H1 (cell line): ENCODE measurements at regions of chr10 and their contacts with region 1.

Region 1: GRCh38 chr10:18087355-18087754 is 52.9 kb upstream of the CACNB2 start:
- DNase-seq: no peak
- H3K4me3 ChIP-seq: no peak overlapping the region
- H3K27ac ChIP-seq: no peak overlapping the region
- H3K4me1 ChIP-seq: no peaks in the 10 kb centered on the region
- H3K27me3 ChIP-seq: no peaks in the 10 kb centered on the region
- CTCF ChIP-seq: no peak
- EP300 ChIP-seq: no peak
- POLR2A ChIP-seq: no peak
- RAD21 ChIP-seq: no peak

Region 2: GRCh38 chr10:18104223-18104872 is 17.0 kb after region 1 on chr10:
- CTCF ChIA-PET with region 1: interaction called, 10 read pairs
- POLR2A ChIA-PET with region 1: no interaction called
- DNase-seq: peak in 1 of 2 experiments; percentile 75
- H3K4me3 ChIP-seq: no peak overlapping the region
- H3K27ac ChIP-seq: no peak overlapping the region
- H3K4me1 ChIP-seq: peaks cover 0 to 2% (median 0%) of the 10 kb centered on the region in 4 experiments; a peak in 1 of 7 replicates
- H3K27me3 ChIP-seq: no peaks in the 10 kb centered on the region
- CTCF ChIP-seq: peak in 2 of 3 experiments; percentile 55 to 67; a peak in 2 of 4 replicates
- EP300 ChIP-seq: no peak
- POLR2A ChIP-seq: no peak
- RAD21 ChIP-seq: peak; percentile 49 to 68